ENCODE measurements at regions of chr16 and their contacts with region 1.

Region 1: DNA sequence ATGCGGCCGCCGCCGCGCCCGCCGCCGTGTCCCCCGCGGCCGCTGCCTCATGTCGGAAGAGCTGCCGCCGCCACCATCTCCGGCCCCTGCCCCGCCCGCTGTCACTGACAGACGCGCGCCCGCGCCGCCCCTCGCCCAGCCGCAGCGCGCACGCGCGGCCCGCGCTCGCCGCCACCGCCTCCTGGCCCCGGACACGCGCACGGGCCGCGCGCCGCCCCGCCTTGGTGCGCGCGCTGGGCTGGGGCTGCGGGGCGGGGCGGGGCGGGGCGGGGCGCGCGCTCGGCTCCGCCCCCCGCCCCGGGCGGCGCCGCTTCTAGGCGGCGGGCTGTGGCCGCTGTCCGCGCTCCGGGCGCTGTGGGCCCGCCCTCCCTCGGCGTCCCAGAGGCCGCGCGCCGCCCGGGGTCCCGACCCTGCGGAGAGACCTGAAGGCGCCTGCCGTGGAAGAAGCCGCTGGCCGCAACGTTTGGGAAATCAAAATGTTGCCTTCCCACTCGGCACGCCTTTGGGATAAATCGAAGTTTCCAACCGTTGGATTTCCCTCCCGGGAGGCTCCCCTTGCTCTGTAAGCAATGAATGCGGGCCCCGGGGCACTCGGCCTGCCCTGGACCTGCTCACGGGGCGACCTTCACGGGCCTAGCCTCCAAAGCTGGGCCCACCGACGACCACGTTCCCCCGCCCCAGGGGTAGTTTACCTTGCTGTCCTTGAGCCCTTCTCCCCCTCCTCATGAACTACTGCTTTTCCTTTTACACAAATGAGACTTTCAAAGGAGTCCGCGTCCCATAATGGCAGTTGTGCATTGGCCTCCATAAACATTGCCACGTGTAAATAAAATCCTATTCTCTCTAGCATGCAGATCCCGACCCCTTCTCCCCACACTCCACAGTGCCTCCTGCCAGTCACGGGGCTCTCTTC is at the start of gene ADCY9:
- DNase-seq: peak; percentile 62
- H3K4me3 Mint-ChIP-seq: peak within 1 kb of the TSS; percentile 74
- H3K27ac Mint-ChIP-seq: peak within 1 kb of the TSS; percentile 65
- H3K4me1 Mint-ChIP-seq: peaks cover 26% of the 10 kb centered on the region
- H3K27me3 Mint-ChIP-seq: no peaks in the 10 kb centered on the region
- CTCF ChIP-seq: no peak
- total RNA-seq, gene ADCY9: 13.1 and 14.2 TPM in 2 replicates

Region 2: DNA sequence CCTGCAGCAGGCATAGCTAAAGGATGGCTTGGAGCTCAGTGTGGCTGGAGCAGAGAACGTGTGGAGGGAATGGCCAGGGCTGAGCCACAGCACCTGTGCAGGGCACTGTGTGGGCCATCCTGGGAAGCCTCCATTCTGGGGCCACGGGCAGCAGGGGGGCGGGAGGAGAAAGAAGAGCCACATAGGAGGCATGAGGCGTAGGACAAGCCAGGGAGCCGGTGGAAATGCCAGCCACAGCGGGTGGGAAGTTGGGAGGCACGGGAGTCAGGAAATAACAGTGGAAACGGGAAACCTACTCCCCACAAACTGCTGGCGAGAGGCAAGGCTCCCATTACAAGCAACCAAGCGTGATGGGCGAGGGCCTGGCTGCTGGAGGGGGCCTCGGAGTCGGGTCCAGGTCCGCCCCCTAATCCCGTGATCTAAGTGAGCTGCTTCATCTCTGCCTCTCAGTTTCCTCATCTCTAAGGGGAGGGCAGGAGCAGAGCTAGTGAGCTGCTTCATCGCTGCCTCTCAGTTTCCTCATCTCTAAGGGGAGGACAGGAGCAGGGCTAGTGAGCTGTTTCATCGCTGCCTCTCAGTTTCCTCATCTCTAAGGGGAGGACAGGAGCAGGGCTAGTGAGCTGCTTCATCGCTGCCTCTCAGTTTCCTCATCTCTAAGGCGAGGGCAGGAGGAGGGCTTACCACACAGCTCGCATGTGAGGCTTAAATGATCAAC is 105.2 kb before region 1 on chr16:
- CTCF ChIA-PET with region 1: no interaction called
- POLR2A ChIA-PET with region 1: interaction called, 4 read pairs
- intact Hi-C with region 1: loop called (anchors 2 kb)
- DNase-seq: no peak
- H3K4me3 Mint-ChIP-seq: no peak overlapping the region
- H3K27ac Mint-ChIP-seq: peak overlapping the region; percentile 17
- H3K4me1 Mint-ChIP-seq: peaks cover 13% of the 10 kb centered on the region
- H3K27me3 Mint-ChIP-seq: no peaks in the 10 kb centered on the region
- CTCF ChIP-seq: no peak

Region 3: GRCh38 chr16:4019371-4019791 is 97.2 kb before region 1 on chr16:
- CTCF ChIA-PET with region 1: no interaction called
- POLR2A ChIA-PET with region 1: interaction called, 3 read pairs
- intact Hi-C with region 1: loop called (anchors 2 kb)
- DNase-seq: no peak
- H3K4me3 Mint-ChIP-seq: no peak overlapping the region
- H3K27ac Mint-ChIP-seq: no peak overlapping the region
- H3K4me1 Mint-ChIP-seq: peaks cover 30% of the 10 kb centered on the region
- H3K27me3 Mint-ChIP-seq: no peaks in the 10 kb centered on the region
- CTCF ChIP-seq: no peak

Region 4: GRCh38 chr16:4032768-4033167 is 83.8 kb before region 1 on chr16:
- CTCF ChIA-PET with region 1: no interaction called
- POLR2A ChIA-PET with region 1: no interaction called
- intact Hi-C with region 1: no loop called
- DNase-seq: no peak
- H3K4me3 Mint-ChIP-seq: no peak overlapping the region
- H3K27ac Mint-ChIP-seq: no peak overlapping the region
- H3K4me1 Mint-ChIP-seq: no peaks in the 10 kb centered on the region
- H3K27me3 Mint-ChIP-seq: no peaks in the 10 kb centered on the region
- CTCF ChIP-seq: no peak

Region 5: GRCh38 chr16:4140652-4141051 is 24.1 kb after region 1 on chr16:
- CTCF ChIA-PET with region 1: interaction called, 4 read pairs
- POLR2A ChIA-PET with region 1: interaction called, 13 read pairs
- intact Hi-C with region 1: no loop called
- DNase-seq: peak; percentile 74
- H3K4me3 Mint-ChIP-seq: peak overlapping the region; percentile 39
- H3K27ac Mint-ChIP-seq: peak overlapping the region; percentile 99
- H3K4me1 Mint-ChIP-seq: peaks cover 24% of the 10 kb centered on the region
- H3K27me3 Mint-ChIP-seq: no peaks in the 10 kb centered on the region
- CTCF ChIP-seq: no peak

Region 6: GRCh38 chr16:4183237-4184036 is 66.8 kb after region 1 on chr16:
- CTCF ChIA-PET with region 1: interaction called, 4 read pairs
- POLR2A ChIA-PET with region 1: interaction called, 4 read pairs
- intact Hi-C with region 1: loop called (anchors 5 kb)
- DNase-seq: peak; percentile 91
- H3K4me3 Mint-ChIP-seq: peak overlapping the region; percentile 65
- H3K27ac Mint-ChIP-seq: peak overlapping the region; percentile 49
- H3K4me1 Mint-ChIP-seq: peaks cover 12% of the 10 kb centered on the region
- H3K27me3 Mint-ChIP-seq: no peaks in the 10 kb centered on the region
- CTCF ChIP-seq: no peak